ENCODE measurements at regions of chr3 and their contacts with region 1.

Region 1: GRCh38 chr3:52471371-52472238 is 16.2 kb downstream of the NISCH start:
- DNase-seq: no peak
- H3K4me3 ChIP-seq: no peak overlapping the region
- H3K27me3 ChIP-seq: no peaks in the 10 kb centered on the region
- CTCF ChIP-seq: peak; percentile 69

Region 2: DNA sequence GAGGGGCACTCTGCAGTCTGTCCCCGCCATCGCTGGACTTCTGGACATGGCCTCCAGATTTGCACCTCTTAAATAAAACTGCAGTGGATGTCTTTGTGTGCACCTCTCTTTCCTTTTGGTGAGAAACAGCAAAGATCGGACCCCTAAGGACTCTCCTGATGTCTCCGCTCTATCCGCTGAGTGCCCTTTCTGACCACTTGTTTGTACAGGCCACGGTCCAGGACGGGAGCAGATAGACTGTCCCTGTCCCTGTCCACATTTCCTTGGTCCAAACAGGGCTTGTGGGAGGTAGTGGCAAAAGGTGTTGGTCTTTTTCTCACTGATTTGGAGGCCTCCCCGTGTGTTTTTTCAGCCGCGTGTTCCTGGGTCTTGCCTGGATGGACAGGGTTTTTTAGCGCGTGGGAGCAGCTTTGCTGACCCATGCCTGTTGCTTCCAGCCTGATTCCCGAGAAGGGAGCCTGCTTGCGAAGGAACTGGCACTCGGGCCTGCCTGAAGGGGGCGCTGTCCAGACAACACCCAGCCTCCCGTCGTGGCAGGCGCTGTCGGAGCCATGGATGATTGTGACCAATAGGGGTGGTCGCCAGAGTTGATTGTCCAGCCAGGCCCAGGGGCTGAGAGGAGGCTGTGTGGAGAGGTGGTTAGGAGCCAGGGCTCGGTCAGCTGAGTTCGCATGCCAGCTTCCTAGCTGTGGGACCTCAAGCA is 10.4 kb after region 1 on chr3:
- CTCF ChIA-PET with region 1: interaction called, 11 read pairs
- POLR2A ChIA-PET with region 1: no interaction called
- DNase-seq: no peak
- H3K4me3 ChIP-seq: no peak overlapping the region
- H3K27me3 ChIP-seq: no peaks in the 10 kb centered on the region
- CTCF ChIP-seq: peak; percentile 62

Measured in BJ (cell line).